ENCODE measurements at regions of chr17 and their contacts with region 1.

Region 1: GRCh38 chr17:43778337-43779144 is at the start of gene DUSP3:
- DNase-seq: peak; percentile 95 to 98 (median 96)
- ATAC-seq: peak; percentile 75 to 91 (median 88)
- H3K4me3 ChIP-seq: peak within 1 kb of the TSS; percentile 85 to 100 (median 96)
- H3K27ac ChIP-seq: peak within 1 kb of the TSS; percentile 99 to 100 (median 100)
- H3K4me1 ChIP-seq: peaks cover 7 to 75% (median 31%) of the 10 kb centered on the region in 12 donors
- H3K27me3 ChIP-seq: no peaks in the 10 kb centered on the region
- CTCF ChIP-seq: peak in 1 of 12 donors; percentile 6
- POLR2A ChIP-seq: peak; percentile 68 to 74
- total RNA-seq, gene DUSP3: 210 to 363 (median 267) TPM

Region 2: DNA sequence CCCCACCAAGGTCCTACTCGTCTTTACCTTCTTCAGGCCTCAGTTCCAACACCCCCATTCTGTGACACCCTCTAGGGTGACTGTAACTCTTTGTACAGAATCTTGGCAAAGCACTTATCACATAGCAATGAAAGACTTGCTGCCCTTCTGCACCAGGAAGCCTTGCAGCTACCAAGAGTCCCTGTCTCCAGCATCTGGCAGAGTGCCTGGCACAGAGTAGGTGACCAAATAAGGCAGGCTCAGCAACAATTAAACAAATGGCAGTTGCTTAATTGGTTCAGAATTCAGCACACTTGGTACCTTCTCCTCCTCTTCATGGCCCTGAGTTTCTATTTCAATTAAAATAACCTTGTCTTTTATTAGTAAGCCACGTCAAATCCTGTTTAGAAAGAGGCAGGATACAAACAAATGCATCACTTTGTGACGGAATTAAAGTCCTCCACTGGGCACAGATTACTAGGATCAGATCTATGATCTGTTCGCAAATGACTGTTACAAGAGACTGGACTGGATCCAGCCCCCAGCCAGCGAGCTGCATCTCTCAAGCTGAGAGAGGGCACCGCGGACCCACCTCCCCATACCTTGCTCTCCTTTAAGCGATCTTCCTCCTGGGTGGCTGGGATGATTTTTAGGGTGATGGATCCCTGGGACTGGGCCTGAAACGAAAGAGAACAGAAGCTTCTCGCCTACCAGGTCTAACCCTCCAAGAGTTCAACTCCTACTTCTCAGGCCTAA is 45.0 kb after region 1 on chr17:
- intact Hi-C with region 1: loop called in 1 of 10 experiments (anchors 5 kb)
- DNase-seq: peak; percentile 70 to 91 (median 79)
- ATAC-seq: peak; percentile 79 to 84 (median 83)
- H3K4me3 ChIP-seq: no peak overlapping the region
- H3K27ac ChIP-seq: peak overlapping the region; percentile 47 to 93 (median 78)
- H3K4me1 ChIP-seq: peaks cover 0 to 58% (median 12%) of the 10 kb centered on the region in 12 donors
- H3K27me3 ChIP-seq: no peaks in the 10 kb centered on the region
- CTCF ChIP-seq: no peak
- POLR2A ChIP-seq: no peak

Region 3: DNA sequence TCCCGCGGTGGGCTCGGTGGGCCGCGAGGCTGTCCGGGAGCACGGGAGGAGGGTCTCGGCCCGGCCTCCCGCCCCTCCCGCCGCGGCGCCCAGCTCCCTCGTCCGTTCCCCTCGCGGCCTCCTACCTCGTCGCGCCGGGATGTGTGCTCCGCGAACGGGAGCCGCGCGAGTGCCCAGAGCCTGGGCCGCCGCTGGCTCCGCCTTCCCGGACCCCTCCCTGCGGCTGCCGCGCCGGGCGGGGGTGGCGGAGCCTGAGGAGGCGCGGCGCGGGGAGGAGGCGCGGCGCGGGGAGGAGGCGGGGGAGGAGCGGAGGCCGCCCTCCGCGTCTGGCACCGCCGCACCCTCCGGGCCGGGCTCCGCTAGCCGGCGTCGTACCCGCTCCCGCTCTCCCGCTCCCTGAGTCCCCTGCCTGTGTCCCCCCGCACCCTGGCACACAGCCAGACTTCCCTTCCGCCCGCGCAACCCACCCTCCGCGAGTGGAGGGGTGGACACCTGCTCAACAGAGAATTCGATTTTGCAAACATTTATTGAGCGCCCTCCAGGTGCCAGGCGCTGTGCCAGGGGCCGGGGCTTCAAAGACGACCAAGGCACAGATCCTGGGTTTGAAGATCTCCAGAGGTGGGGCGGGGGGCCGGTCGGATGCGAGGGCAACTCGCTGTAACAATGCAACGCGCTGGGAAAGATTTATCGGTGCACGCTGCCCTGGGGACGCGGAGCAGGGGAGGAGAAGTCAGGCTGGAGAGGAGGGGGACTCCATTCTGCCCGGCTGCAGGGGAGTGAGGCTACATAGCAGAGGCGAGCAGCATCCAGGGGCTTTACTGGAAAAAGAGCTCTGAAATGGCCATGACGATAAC is 54.7 kb after region 1 on chr17 and contains the start of gene MPP3:
- intact Hi-C with region 1: loop called in 9 of 10 experiments (anchors 2 to 10 kb)
- DNase-seq: peak; percentile 72 to 86 (median 80)
- ATAC-seq: peak; percentile 24 to 84 (median 74)
- H3K4me3 ChIP-seq: peak within 1 kb of the TSS; percentile 64 to 93 (median 78)
- H3K27ac ChIP-seq: peak within 1 kb of the TSS; percentile 66 to 96 (median 83)
- H3K4me1 ChIP-seq: peaks cover 0 to 54% (median 15%) of the 10 kb centered on the region in 12 donors
- H3K27me3 ChIP-seq: no peaks in the 10 kb centered on the region
- CTCF ChIP-seq: no peak
- POLR2A ChIP-seq: peak; percentile 81 to 89
- total RNA-seq, gene MPP3: 13.8 to 70.2 (median 25.3) TPM

Region 4: GRCh38 chr17:43840814-43841213 is 62.3 kb after region 1 on chr17:
- intact Hi-C with region 1: loop called in 7 of 10 experiments (anchors 2 to 10 kb)
- DNase-seq: no peak
- ATAC-seq: peak in 2 of 4 donors; percentile 43 to 65
- H3K4me3 ChIP-seq: no peak overlapping the region
- H3K27ac ChIP-seq: peak overlapping the region in 1 of 12 donors; percentile 11
- H3K4me1 ChIP-seq: peaks cover 0 to 16% (median 7%) of the 10 kb centered on the region in 12 donors
- H3K27me3 ChIP-seq: no peaks in the 10 kb centered on the region
- CTCF ChIP-seq: peak in 9 of 12 donors; percentile 8 to 41 (median 23)
- POLR2A ChIP-seq: no peak

Region 5: DNA sequence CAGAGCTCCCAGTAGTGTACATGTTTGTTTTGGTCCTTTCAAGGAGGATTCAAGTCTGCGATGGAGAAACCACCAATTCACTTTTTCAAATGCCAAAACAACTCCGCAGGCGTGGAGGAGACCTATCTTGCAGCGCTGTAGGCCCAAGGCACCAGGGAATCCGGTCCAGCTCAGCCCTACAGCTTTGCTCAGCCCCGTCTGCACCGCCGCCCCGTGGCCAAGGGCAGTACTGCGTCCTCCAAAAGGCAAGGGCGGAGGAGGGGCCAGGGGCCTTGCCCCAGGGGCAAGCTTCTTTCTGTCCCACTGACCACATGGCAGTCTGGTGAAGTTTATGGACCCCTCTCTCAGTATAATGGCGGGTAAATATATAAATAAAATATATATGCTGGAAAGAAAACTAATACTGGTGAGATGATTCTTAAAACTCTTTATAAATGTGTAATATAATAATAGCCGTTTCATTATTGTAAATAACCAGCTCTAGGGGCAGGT is 67.7 kb after region 1 on chr17:
- intact Hi-C with region 1: loop called in 6 of 10 experiments (anchors 2 to 5 kb)
- DNase-seq: peak; percentile 85 to 93 (median 88)
- ATAC-seq: peak; percentile 90 to 96 (median 94)
- H3K4me3 ChIP-seq: peak overlapping the region in 6 of 12 donors; percentile 39 to 57 (median 50)
- H3K27ac ChIP-seq: peak overlapping the region; percentile 13 to 81 (median 71)
- H3K4me1 ChIP-seq: peaks cover 0 to 18% (median 8%) of the 10 kb centered on the region in 12 donors
- H3K27me3 ChIP-seq: no peaks in the 10 kb centered on the region
- CTCF ChIP-seq: peak; percentile 95 to 99 (median 98)
- POLR2A ChIP-seq: no peak